Naive thymus-derived CD4-positive, alpha-beta T cell (primary cell): ENCODE measurements at regions of chr9 and their contacts with region 1.

Region 1: GRCh38 chr9:95875305-95876137 is at the start of gene ERCC6L2:
- DNase-seq: peak; percentile 87 to 94 (median 90)
- ATAC-seq: peak; percentile 93
- H3K4me3 ChIP-seq: no peak within 1 kb of the TSS
- H3K4me3 Mint-ChIP-seq: no peak within 1 kb of the TSS
- H3K27ac ChIP-seq: no peak within 1 kb of the TSS
- H3K27ac Mint-ChIP-seq: no peak within 1 kb of the TSS
- H3K4me1 ChIP-seq: peaks cover 8 to 20% of the 10 kb centered on the region in 2 donors
- H3K4me1 Mint-ChIP-seq: peaks cover 17 to 44% (median 35%) of the 10 kb centered on the region in 7 donors
- H3K27me3 ChIP-seq: no peaks in the 10 kb centered on the region
- H3K27me3 Mint-ChIP-seq: no peaks in the 10 kb centered on the region
- total RNA-seq, gene ERCC6L2: 46.2 to 82.8 (median 52.4) TPM

Region 2: GRCh38 chr9:95317119-95317892 is 558.2 kb before region 1 on chr9 and contains the start of gene FANCC:
- CTCF ChIA-PET with region 1: no interaction called
- POLR2A ChIA-PET with region 1: no interaction called
- intact Hi-C with region 1: loop called (anchors 5 kb)
- DNase-seq: peak; percentile 74 to 89 (median 81)
- ATAC-seq: peak; percentile 94
- H3K4me3 ChIP-seq: peak within 1 kb of the TSS; percentile 85
- H3K4me3 Mint-ChIP-seq: peak within 1 kb of the TSS; percentile 78 to 95 (median 92)
- H3K27ac ChIP-seq: peak within 1 kb of the TSS; percentile 91
- H3K27ac Mint-ChIP-seq: peak within 1 kb of the TSS; percentile 75 to 95 (median 89)
- H3K4me1 ChIP-seq: peaks cover 3 to 7% of the 10 kb centered on the region in 2 donors
- H3K4me1 Mint-ChIP-seq: peaks cover 8 to 33% (median 23%) of the 10 kb centered on the region in 7 donors
- H3K27me3 ChIP-seq: no peaks in the 10 kb centered on the region
- H3K27me3 Mint-ChIP-seq: peaks cover 0 to 26% (median 0%) of the 10 kb centered on the region in 5 donors
- total RNA-seq, gene FANCC: 5.7 to 14.6 (median 7.9) TPM

Region 3: DNA sequence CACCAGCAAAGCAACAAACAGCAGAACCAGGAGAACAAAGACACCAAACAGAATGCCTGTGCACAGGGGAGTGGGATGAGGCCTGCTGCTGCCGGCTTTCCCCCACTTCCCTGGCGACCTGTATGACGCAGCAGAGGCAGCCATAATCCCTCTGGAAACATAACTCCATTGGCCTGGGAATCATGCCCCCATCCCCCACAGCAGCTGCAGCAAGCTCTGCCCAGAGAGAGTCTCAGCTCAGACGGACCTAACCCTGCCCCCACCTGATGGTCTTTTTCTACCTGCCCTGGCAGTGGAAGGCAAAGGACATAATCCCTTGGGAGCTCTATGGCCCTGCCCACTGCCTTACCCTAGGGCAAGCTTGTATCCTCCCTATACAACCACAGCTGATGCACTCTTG is 476.3 kb before region 1 on chr9:
- CTCF ChIA-PET with region 1: no interaction called
- POLR2A ChIA-PET with region 1: no interaction called
- intact Hi-C with region 1: no loop called
- DNase-seq: no peak
- ATAC-seq: no peak
- H3K4me3 ChIP-seq: no peak overlapping the region
- H3K4me3 Mint-ChIP-seq: no peak overlapping the region
- H3K27ac ChIP-seq: no peak overlapping the region
- H3K27ac Mint-ChIP-seq: no peak overlapping the region
- H3K4me1 ChIP-seq: no peaks in the 10 kb centered on the region
- H3K4me1 Mint-ChIP-seq: no peaks in the 10 kb centered on the region
- H3K27me3 ChIP-seq: no peaks in the 10 kb centered on the region
- H3K27me3 Mint-ChIP-seq: peaks cover 0 to 56% (median 12%) of the 10 kb centered on the region in 5 donors

Region 4: DNA sequence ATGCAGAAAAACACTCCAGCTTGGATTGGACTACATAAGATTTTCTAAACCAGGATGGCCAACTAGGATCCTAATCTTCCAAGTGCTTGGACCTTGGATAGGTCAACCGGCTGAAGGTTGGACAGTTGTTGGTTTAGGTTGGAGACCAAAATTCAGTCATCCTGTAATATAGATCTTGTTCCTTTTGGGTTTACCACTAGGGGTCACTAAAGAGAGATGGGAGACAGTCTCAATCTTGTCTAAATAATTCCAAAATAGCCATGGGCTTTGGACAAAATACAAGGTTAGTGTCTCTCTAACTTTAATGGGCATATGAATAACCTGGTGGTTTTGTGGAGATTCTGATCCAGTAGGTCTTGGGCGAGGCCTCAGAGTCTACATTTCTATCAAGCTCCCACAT is 148.8 kb before region 1 on chr9:
- CTCF ChIA-PET with region 1: interaction called, 3 read pairs
- POLR2A ChIA-PET with region 1: no interaction called
- intact Hi-C with region 1: loop called (anchors 1 kb)
- DNase-seq: peak in 1 of 9 donors; percentile 31
- ATAC-seq: no peak
- H3K4me3 ChIP-seq: no peak overlapping the region
- H3K4me3 Mint-ChIP-seq: peak overlapping the region in 1 of 10 donors; percentile 20
- H3K27ac ChIP-seq: no peak overlapping the region
- H3K27ac Mint-ChIP-seq: no peak overlapping the region
- H3K4me1 ChIP-seq: peaks cover 18 to 24% of the 10 kb centered on the region in 2 donors
- H3K4me1 Mint-ChIP-seq: peaks cover 33 to 58% (median 49%) of the 10 kb centered on the region in 7 donors
- H3K27me3 ChIP-seq: no peaks in the 10 kb centered on the region
- H3K27me3 Mint-ChIP-seq: peaks cover 0 to 31% (median 0%) of the 10 kb centered on the region in 5 donors

Region 5: DNA sequence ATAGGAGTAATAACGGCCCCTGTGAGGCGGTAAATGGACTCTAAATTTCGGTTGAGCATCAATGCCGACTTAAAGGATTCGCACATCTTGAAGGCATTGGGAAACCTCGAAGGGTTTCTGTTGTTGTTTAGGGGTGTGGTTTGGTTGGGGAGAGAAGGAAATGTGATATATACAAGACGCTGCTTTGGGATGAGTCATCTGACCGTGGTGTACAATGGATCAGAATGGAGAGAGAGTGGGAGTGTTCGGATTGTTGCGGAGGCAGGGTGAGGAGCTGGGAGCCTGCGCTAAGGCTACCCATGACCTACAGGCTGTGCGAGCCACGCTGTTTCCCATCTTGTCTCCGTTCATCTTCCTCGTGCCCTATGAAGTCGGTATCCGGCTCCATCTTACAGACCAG is 60.4 kb before region 1 on chr9:
- CTCF ChIA-PET with region 1: no interaction called
- POLR2A ChIA-PET with region 1: no interaction called
- intact Hi-C with region 1: no loop called
- DNase-seq: no peak
- ATAC-seq: no peak
- H3K4me3 ChIP-seq: no peak overlapping the region
- H3K4me3 Mint-ChIP-seq: no peak overlapping the region
- H3K27ac ChIP-seq: no peak overlapping the region
- H3K27ac Mint-ChIP-seq: no peak overlapping the region
- H3K4me1 ChIP-seq: no peaks in the 10 kb centered on the region
- H3K4me1 Mint-ChIP-seq: peaks cover 0 to 5% (median 0%) of the 10 kb centered on the region in 7 donors
- H3K27me3 ChIP-seq: no peaks in the 10 kb centered on the region
- H3K27me3 Mint-ChIP-seq: peaks cover 0 to 16% (median 0%) of the 10 kb centered on the region in 5 donors

Region 6: DNA sequence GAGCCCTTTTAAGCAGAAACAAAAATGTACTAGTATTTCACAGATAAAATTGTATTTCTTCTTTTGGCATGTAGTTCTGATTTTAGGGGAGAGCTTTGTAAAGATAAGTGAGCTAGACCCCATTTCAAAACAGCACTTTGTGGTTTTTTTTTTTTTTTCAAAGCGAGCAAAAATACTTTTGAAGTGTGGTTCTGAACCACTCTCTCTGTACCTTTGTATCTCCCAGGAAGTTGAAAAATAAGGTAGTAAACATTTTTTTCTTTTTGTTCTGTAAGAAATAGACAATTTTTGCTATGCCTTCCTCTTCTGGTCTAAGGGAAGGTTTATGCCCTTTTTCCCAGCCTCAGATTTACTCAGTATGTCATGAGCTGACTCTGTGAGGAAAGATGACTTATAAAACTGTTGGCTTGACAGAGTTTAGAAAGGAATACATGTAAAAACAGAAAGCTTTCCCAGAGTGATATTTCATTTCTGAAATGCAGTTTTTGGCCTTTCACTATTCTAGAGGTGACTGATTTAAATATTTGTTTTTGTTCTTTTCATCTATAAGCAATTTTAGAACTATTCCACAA is 12.5 kb after region 1 on chr9:
- CTCF ChIA-PET with region 1: interaction called, 7 read pairs
- POLR2A ChIA-PET with region 1: interaction called, 77 read pairs
- intact Hi-C with region 1: loop called (anchors 1 kb)
- DNase-seq: peak in 6 of 9 donors; percentile 38 to 65 (median 56)
- ATAC-seq: peak; percentile 82
- H3K4me3 ChIP-seq: peak overlapping the region; percentile 26
- H3K4me3 Mint-ChIP-seq: peak overlapping the region; percentile 60 to 83 (median 77)
- H3K27ac ChIP-seq: peak overlapping the region; percentile 59
- H3K27ac Mint-ChIP-seq: peak overlapping the region; percentile 81 to 94 (median 89)
- H3K4me1 ChIP-seq: peaks cover 16 to 56% of the 10 kb centered on the region in 2 donors
- H3K4me1 Mint-ChIP-seq: peaks cover 22 to 89% (median 83%) of the 10 kb centered on the region in 7 donors
- H3K27me3 ChIP-seq: no peaks in the 10 kb centered on the region
- H3K27me3 Mint-ChIP-seq: no peaks in the 10 kb centered on the region

Region 7: GRCh38 chr9:96009690-96010472 is 134.4 kb after region 1 on chr9:
- CTCF ChIA-PET with region 1: no interaction called
- POLR2A ChIA-PET with region 1: interaction called, 6 read pairs
- intact Hi-C with region 1: loop called in 1 of 2 experiments (anchors 1 kb)
- DNase-seq: peak in 5 of 9 donors; percentile 44 to 68 (median 62)
- ATAC-seq: peak; percentile 83
- H3K4me3 ChIP-seq: no peak overlapping the region
- H3K4me3 Mint-ChIP-seq: peak overlapping the region; percentile 25 to 75 (median 56)
- H3K27ac ChIP-seq: peak overlapping the region; percentile 68
- H3K27ac Mint-ChIP-seq: peak overlapping the region in 8 of 9 donors; percentile 65 to 98 (median 92)
- H3K4me1 ChIP-seq: peaks cover 43 to 57% of the 10 kb centered on the region in 2 donors
- H3K4me1 Mint-ChIP-seq: peaks cover 0 to 55% (median 24%) of the 10 kb centered on the region in 7 donors
- H3K27me3 ChIP-seq: no peaks in the 10 kb centered on the region
- H3K27me3 Mint-ChIP-seq: no peaks in the 10 kb centered on the region

Region 8: GRCh38 chr9:96217754-96218693 is 342.5 kb after region 1 on chr9:
- CTCF ChIA-PET with region 1: no interaction called
- POLR2A ChIA-PET with region 1: no interaction called
- intact Hi-C with region 1: loop called in 1 of 2 experiments (anchors 2 kb)
- DNase-seq: peak; percentile 40 to 86 (median 73)
- ATAC-seq: peak; percentile 93
- H3K4me3 ChIP-seq: peak overlapping the region; percentile 17
- H3K4me3 Mint-ChIP-seq: peak overlapping the region; percentile 65 to 89 (median 77)
- H3K27ac ChIP-seq: no peak overlapping the region
- H3K27ac Mint-ChIP-seq: peak overlapping the region in 6 of 9 donors; percentile 6 to 78 (median 56)
- H3K4me1 ChIP-seq: peaks cover 0 to 11% of the 10 kb centered on the region in 2 donors
- H3K4me1 Mint-ChIP-seq: peaks cover 0 to 22% (median 11%) of the 10 kb centered on the region in 7 donors
- H3K27me3 ChIP-seq: peaks cover 0 to 3% of the 10 kb centered on the region in 2 donors
- H3K27me3 Mint-ChIP-seq: peaks cover 17 to 56% (median 47%) of the 10 kb centered on the region in 5 donors